GM18951 (cell line): ENCODE measurements at regions of chr10 and their contacts with region 1.

Region 1: DNA sequence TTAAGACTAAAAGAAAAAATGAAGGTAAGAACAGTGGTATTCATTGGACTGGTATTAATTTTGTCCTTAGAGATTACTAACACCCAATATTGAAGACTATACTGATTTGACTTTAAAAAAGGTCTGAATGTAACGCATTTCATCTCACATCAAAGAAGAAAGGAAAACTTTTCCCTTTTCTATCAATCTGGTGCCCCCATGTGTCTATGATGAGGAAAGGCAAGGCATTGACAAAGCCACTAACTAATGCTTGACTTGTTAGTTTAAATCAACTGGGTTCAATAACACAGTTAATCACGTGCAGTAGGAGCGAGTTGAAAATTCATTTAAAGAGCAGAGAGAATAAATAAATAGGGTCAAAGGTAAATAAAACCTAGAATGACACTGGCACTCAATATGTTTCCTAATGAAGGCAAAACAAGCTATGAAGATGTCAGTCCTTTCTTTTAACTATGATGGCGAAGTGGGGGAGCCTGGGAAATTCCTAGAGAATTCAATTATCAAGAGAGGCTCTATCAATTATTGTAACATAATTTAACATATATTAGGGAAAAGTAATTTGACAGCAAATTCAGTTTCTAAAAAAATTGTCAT is 180.9 kb downstream of the ANK3 start:
- POLR2A ChIP-seq: no peak

Region 2: GRCh38 chr10:59674211-59674836 is 534.4 kb before region 1 on chr10:
- in situ Hi-C with region 1: loop called (anchors 25 kb)
- POLR2A ChIP-seq: no peak

Region 3: GRCh38 chr10:60099998-60100747 is 108.6 kb before region 1 on chr10:
- in situ Hi-C with region 1: loop called (anchors 10 kb)
- POLR2A ChIP-seq: no peak